ENCODE measurements at regions of chr10 and their contacts with region 1.

Region 1: DNA sequence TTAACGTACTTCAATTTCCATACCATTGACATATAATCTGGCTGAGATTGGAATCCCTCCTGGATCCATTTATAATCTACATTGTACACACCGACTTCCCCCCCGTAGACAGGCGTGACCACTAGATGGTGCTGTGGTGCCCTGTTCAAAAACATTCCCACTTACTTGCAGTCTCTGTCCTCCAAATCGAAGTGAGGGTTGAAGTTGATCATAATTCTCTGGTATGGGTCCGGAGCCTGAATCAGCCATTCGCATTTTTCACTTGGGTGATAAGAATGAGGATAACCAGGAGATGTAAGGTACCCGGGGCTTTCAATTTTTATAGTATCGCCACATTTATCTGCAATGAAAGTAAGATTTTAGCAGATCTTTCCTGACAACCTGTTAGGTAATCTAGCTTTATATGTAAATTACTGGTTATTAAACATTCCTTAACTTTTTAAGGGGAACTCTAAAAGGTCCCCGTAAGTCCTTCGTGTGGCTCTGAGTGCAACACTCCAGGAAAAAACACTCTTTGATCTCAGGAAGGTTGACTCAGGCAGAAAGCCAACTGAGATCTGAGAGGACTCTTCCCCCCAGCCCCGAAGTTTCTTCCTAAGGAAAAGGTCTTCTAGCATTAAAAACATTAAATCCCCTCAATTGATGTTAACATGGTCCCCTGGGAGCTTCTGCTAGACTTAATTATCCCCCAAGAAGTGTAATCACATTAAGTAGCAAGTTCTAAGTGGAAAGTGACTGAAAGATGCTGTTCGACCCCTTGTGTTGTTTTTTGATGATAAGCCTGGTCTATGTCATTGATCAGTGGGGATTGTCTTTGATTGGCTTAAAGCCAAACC is 3.7 kb downstream of the NRP1 start:
- H3K4me3 Mint-ChIP-seq: peak overlapping the region; percentile 96
- H3K27ac Mint-ChIP-seq: peak overlapping the region; percentile 94
- H3K4me1 Mint-ChIP-seq: peaks cover 26% of the 10 kb centered on the region
- H3K27me3 Mint-ChIP-seq: peaks cover under 1% of the 10 kb centered on the region

Region 2: GRCh38 chr10:33412653-33413361 is 82.0 kb after region 1 on chr10:
- intact Hi-C with region 1: loop called (anchors 1 kb)
- H3K4me3 Mint-ChIP-seq: no peak overlapping the region
- H3K27ac Mint-ChIP-seq: peak overlapping the region; percentile 43
- H3K4me1 Mint-ChIP-seq: peaks cover 25% of the 10 kb centered on the region
- H3K27me3 Mint-ChIP-seq: peaks cover 17% of the 10 kb centered on the region

Region 3: GRCh38 chr10:33621101-33621500 is 290.3 kb after region 1 on chr10:
- intact Hi-C with region 1: loop called (anchors 1 kb)
- H3K4me3 Mint-ChIP-seq: peak overlapping the region; percentile 50
- H3K27ac Mint-ChIP-seq: peak overlapping the region; percentile 93
- H3K4me1 Mint-ChIP-seq: peaks cover 64% of the 10 kb centered on the region
- H3K27me3 Mint-ChIP-seq: peaks cover 2% of the 10 kb centered on the region

Region 4: DNA sequence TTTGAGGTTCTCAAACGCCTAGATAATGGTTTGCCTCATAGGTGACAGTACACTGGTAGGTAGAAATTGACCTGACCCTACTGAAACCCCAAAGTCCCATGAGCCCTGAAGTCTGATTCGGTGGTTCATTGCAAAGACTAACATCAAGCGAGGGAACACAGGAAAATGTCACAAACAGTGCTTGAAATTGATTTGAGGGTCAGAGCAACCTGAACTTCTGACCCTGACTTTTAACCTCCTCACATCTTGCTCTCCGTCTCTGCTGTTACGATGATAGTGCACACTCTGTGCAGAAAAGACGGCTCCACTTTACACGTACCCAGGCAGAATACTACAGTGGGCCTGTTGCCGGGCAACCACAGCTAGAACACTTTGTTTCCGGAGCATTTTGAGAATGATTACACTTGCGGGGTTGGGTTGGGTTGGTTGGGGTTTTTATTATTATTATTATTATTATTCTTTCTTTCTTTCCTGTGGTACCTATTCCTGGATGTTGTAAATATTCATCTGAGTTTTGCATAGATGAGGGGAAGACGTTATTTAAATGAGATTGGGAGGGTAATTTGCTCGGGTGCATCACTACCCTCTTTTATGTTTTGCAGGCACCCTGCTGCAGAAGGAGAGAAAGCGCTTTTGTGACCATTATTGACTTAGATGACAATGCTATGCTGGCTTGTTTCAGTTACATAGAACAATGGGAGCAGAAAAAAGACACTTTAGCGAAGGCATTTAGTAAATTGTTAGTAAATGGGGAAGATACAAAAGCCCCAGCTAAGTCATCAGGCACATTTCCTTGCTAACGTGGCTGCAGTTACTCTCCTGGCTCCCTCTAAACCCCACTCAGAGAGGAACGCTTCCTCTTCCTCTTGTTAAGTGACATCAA is 441.9 kb after region 1 on chr10:
- intact Hi-C with region 1: loop called (anchors 10 kb)
- H3K4me3 Mint-ChIP-seq: peak overlapping the region; percentile 24
- H3K27ac Mint-ChIP-seq: peak overlapping the region; percentile 67
- H3K4me1 Mint-ChIP-seq: peaks cover 23% of the 10 kb centered on the region
- H3K27me3 Mint-ChIP-seq: peaks cover 1% of the 10 kb centered on the region

Measured in dendritic cell treated with granulocyte-macrophage colony-stimulating factor and Interleukin-4, amounts not matched to agents 40 ng/mL and 50 ng/mL, for 4 days (primary cell).